AG04450 (cell line): ENCODE measurements at regions of chr11 and their contacts with region 1.

Region 1: GRCh38 chr11:6353367-6353987 is 33.2 kb upstream of the CAVIN3 start:
- DNase-seq: no peak
- H3K4me3 ChIP-seq: no peak overlapping the region
- H3K27ac ChIP-seq: no peak overlapping the region
- H3K27me3 ChIP-seq: no peaks in the 10 kb centered on the region
- CTCF ChIP-seq: peak; percentile 98

Region 2: GRCh38 chr11:6022956-6023355 is 330.5 kb before region 1 on chr11:
- CTCF ChIA-PET with region 1: interaction called, 38 read pairs
- POLR2A ChIA-PET with region 1: no interaction called
- DNase-seq: no peak
- H3K4me3 ChIP-seq: no peak overlapping the region
- H3K27ac ChIP-seq: no peak overlapping the region
- H3K27me3 ChIP-seq: no peaks in the 10 kb centered on the region
- CTCF ChIP-seq: peak; percentile 45

Region 3: DNA sequence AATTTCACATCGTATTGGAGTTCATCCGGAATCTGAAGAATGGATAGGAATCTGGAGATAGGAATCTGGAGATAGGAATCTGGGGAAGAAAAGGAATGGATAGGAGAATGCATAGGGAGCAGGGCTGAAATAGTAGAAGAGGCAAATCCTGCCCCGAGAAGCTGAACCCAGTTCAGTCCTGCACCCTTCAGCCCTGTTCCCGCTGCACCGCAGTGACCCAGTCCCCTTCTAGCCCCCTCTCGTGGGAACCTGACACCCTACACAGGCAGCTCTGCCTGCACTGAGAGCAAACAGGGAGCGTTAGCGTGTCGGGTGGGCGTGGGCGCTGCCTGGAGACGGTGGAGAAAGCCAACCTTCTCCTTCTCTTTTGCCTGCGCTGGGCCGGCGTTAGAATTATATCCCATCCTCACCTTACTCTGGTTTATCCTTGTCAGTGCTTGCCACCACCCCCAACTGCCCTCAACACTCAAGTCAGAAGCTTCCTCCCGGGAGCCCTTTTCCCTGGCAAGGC is 94.9 kb before region 1 on chr11:
- CTCF ChIA-PET with region 1: interaction called, 22 read pairs
- POLR2A ChIA-PET with region 1: no interaction called
- DNase-seq: no peak
- H3K4me3 ChIP-seq: no peak overlapping the region; the same call in 1 of the 2 replicates
- H3K27ac ChIP-seq: no peak overlapping the region
- H3K27me3 ChIP-seq: peaks cover 50% of the 10 kb centered on the region
- CTCF ChIP-seq: no peak

Region 4: DNA sequence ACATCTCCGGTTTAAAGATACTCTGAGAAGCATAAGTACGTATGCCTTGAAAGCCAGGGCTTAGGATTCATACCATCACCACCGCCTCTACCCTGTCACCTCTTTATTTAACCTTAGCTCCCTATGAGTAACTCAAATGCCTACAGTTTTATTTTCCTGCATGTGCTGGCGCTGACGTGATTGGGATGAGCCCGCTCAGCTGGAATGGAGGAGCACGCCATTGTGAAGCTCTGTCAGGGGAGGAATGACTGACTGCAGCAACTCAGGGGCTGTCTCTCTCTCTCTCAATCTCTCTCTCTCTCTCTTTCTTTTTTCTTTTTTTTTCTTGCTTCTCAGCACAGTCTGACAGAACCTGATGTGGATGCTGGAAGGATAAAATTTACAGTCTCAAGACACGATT is 45.6 kb before region 1 on chr11:
- CTCF ChIA-PET with region 1: interaction called, 14 read pairs
- POLR2A ChIA-PET with region 1: no interaction called
- DNase-seq: no peak
- H3K4me3 ChIP-seq: no peak overlapping the region
- H3K27ac ChIP-seq: no peak overlapping the region
- H3K27me3 ChIP-seq: no peaks in the 10 kb centered on the region
- CTCF ChIP-seq: no peak

Region 5: DNA sequence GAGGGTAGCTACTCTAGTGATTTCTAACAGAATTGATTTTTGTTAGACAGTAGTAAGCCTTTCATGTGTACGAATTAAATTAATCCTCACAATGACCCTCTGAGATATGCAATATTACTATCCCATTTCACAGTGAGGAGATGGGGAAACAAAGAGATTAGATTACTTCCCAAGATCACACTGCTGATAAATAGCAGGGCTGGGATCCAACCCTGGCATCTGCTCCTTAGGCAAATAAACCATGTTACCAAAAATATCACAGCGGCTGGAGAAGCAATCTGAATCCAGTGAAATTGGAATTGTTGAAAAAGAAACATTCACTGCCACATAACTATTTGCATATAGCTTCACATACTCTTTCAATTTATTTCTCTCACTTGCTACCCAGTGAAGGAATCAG is 20.4 kb before region 1 on chr11:
- CTCF ChIA-PET with region 1: interaction called, 20 read pairs
- POLR2A ChIA-PET with region 1: no interaction called
- DNase-seq: no peak
- H3K4me3 ChIP-seq: no peak overlapping the region
- H3K27ac ChIP-seq: no peak overlapping the region
- H3K27me3 ChIP-seq: peaks cover 2% of the 10 kb centered on the region
- CTCF ChIP-seq: no peak

Region 6: GRCh38 chr11:6452219-6452618 is 98.7 kb after region 1 on chr11:
- CTCF ChIA-PET with region 1: no interaction called
- POLR2A ChIA-PET with region 1: no interaction called
- DNase-seq: no peak
- H3K4me3 ChIP-seq: no peak overlapping the region
- H3K27ac ChIP-seq: no peak overlapping the region
- H3K27me3 ChIP-seq: no peaks in the 10 kb centered on the region
- CTCF ChIP-seq: no peak

Region 7: DNA sequence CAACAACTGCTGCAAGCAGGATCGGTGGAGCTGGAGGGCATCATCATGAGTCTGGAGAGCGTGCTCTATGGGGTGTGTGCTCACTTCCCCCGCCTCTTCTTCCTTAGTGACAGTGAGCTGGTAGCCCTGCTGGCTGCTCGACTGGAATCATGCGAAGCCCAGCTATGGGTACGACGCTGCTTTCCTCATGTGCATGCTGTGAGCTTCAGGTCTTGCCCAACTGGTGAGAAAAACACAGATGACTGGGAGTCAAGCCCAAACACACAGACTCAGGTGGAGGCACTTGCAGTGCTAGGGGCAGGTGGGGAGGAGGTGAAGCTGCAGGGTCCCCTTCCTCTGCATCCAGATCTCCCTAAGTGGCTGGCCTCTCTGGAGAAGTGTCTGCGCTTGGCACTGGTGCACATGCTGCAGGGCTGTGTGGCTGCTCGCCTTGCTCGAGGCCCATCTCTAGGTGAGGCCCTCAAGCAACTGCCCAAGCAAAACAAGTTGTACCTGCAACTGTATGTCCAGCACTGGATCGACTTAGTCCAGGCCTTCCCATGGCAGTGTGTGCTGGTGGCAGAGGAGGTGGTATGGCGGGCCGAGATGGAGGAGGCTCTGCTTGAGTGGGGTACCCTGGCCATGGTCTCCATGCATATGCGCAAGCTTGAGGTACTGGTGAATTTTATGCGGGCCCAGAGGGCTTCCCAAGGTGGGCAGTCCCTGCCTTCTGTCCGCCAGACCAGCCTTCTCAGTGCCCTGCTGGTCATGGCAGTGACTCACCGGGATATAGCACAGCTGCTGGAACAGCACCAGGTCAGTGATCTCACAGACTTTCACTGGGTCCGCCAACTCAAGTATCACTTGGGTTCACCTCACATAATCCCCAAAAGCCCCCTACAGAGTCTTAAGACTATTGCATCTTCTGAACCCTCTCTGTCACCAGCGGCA is 191.7 kb after region 1 on chr11:
- CTCF ChIA-PET with region 1: no interaction called
- POLR2A ChIA-PET with region 1: no interaction called
- DNase-seq: no peak
- H3K4me3 ChIP-seq: no peak overlapping the region
- H3K27ac ChIP-seq: no peak overlapping the region
- H3K27me3 ChIP-seq: no peaks in the 10 kb centered on the region
- CTCF ChIP-seq: no peak